Cardiac septum (tissue), 1 donor: ENCODE measurements at regions of chr7 and their contacts with region 1.

Region 1: DNA sequence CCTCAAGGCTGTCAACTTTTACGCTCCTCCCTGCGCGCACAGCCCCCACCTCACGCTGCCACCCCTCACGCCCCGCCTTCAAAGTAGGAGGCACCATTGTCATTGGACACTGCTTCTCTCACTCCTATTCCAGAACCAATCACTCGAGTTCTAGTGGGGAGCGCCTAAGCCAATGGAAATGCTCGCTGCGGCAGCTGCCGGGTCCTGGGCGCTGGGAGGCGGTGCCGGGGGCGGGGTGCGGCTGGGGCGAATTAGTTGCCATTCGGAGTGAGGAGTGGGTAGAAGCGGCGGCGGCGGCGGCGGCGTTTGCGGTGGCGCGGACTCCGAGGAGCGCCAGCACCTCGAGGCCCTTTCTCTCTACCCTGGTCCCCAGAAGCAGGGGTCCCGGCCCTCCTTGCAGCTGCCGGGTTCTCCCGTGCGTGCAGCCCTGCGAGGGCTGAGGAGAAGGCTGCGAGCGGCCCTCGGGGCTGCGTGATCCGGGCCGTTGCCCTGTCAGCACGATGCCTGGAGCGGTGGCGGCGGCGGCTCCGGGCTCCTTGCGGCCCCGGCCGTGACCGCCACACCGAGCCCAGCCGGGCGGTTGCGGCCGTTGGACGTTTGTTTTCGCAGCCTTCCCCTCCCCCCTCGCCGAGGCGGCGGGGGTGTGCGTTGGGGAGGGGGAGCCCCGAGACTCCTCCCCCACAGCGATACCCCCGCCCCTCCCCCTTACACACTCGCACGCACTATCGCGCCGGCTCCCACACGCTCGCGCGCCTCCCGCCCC is at the start of gene GLCCI1:
- DNase-seq: peak; percentile 99
- total RNA-seq, gene GLCCI1: 5.1 TPM

Region 2: GRCh38 chr7:7639847-7640220 is 328.9 kb before region 1 on chr7:
- intact Hi-C with region 1: loop called (anchors 2 kb)
- DNase-seq: no peak

Region 3: DNA sequence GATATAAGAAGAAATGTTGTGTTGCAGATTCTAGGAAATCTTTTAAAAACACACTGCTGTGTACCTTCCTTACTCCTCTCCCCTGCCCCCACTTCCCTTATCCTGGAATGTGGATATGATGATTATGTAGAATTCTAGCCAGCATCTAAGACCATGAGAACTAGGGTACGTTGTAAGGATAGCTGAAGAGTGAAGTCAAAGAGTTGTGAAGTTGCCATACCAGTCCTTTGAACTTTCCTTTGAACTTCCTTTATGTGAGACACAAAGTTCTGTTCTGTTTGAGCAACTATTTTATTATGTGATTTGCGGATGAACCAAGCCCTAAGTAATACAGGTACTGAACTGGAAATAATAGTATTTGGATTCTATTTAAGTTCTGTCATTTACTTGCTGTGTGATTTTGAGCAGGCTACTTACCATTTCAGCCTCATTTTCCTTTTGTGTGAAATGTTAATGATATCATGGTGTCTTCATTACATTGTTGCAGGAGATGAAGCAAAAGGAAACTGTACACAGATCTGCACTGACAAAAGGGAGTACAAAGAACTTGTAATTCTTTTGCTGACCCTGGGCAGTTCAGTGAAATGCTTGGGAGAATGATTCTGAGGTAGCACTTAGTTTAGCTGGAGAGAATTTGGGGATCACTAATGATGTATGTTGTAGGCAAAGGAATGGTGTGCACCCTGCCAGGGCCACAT is 281.8 kb before region 1 on chr7:
- intact Hi-C with region 1: loop called (anchors 5 kb)
- DNase-seq: no peak

Region 4: GRCh38 chr7:7761340-7761980 is 207.3 kb before region 1 on chr7:
- intact Hi-C with region 1: loop called (anchors 10 kb)
- DNase-seq: no peak

Region 5: GRCh38 chr7:8217200-8218068 is 248.7 kb after region 1 on chr7:
- intact Hi-C with region 1: loop called (anchors 10 kb)
- DNase-seq: no peak